Mammary epithelial cell (primary cell): ENCODE measurements at regions of chr1 and their contacts with region 1.

Region 1: GRCh38 chr1:166489670-166490436 is 323.1 kb upstream of the FAM78B start:
- DNase-seq: no peak
- H3K4me3 ChIP-seq: no peak overlapping the region
- H3K27ac ChIP-seq: no peak overlapping the region
- H3K4me1 ChIP-seq: no peaks in the 10 kb centered on the region
- H3K27me3 ChIP-seq: no peaks in the 10 kb centered on the region
- CTCF ChIP-seq: no peak

Region 2: GRCh38 chr1:166730299-166730888 is 240.5 kb after region 1 on chr1:
- CTCF ChIA-PET with region 1: no interaction called
- dilution Hi-C with region 1: no loop called
- in situ Hi-C with region 1: no loop called
- intact Hi-C with region 1: loop called (anchors 5 kb)
- DNase-seq: peak; percentile 74
- H3K4me3 ChIP-seq: no peak overlapping the region
- H3K27ac ChIP-seq: no peak overlapping the region
- H3K4me1 ChIP-seq: peaks cover 12% of the 10 kb centered on the region
- H3K27me3 ChIP-seq: no peaks in the 10 kb centered on the region
- CTCF ChIP-seq: peak; percentile 32 to 44